Activated CD4-positive, alpha-beta memory T cell treated with anti-CD3 and anti-CD28 coated beads for 36 hours (primary cell): ENCODE measurements at regions of chr5 and their contacts with region 1.

Region 1: GRCh38 chr5:148186248-148186996 is 16.4 kb upstream of the SPINK6 start:
- DNase-seq: no peak
- H3K4me3 Mint-ChIP-seq: no peak overlapping the region
- H3K27ac Mint-ChIP-seq: no peak overlapping the region
- H3K4me1 Mint-ChIP-seq: peaks cover 9% of the 10 kb centered on the region
- H3K27me3 Mint-ChIP-seq: peaks cover 8% of the 10 kb centered on the region

Region 2: DNA sequence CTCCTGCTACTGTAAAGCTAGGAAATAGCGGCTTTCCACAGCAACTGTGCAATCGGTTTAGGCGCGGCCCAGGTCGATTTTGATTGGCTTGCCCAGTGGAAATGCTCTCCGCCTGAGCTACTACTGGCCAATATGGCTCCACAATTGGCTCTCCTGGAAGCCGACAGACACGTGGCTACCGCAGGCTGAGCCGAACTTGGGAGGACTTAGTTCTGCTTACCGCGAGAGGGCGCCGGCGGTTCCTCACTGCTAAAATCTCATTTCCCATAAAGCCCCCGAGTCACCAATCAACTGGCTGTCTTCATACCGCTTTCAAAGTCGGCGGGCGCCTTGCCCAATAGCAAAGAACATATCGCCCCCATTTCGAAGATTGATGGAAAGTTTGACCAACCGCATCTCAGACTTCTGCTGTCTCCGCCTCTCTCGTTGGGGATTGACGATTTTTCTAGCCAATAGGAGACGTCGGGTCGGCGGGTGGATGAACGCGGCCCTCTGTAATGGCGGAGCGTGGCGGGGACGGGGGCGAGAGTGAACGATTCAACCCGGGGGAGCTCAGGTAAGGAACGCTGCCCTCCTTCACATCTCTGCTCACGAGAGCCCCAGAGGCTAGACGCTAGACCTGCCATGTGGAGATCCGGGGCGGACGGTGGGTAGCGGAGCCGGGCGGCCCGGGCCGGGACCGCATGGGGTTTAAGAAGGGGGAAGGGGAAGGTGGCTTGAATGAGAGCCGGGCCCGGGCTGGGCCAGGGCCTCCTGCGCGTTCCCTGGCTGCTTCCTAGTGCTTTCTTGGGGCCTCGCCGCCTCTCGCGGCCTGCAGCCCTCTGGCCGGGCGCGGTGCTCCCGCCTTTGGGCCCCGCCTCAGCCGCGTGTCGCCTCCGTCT is 1739.3 kb before region 1 on chr5 and contains the start of gene TCERG1:
- CTCF ChIA-PET with region 1: no interaction called
- POLR2A ChIA-PET with region 1: no interaction called
- intact Hi-C with region 1: loop called (anchors 10 kb)
- DNase-seq: peak; percentile 99
- H3K4me3 Mint-ChIP-seq: peak within 1 kb of the TSS; percentile 97
- H3K27ac Mint-ChIP-seq: peak within 1 kb of the TSS; percentile 98
- H3K4me1 Mint-ChIP-seq: peaks cover 37% of the 10 kb centered on the region
- H3K27me3 Mint-ChIP-seq: no peaks in the 10 kb centered on the region
- total RNA-seq, gene TCERG1: 93.3 to 99.4 TPM

Region 3: DNA sequence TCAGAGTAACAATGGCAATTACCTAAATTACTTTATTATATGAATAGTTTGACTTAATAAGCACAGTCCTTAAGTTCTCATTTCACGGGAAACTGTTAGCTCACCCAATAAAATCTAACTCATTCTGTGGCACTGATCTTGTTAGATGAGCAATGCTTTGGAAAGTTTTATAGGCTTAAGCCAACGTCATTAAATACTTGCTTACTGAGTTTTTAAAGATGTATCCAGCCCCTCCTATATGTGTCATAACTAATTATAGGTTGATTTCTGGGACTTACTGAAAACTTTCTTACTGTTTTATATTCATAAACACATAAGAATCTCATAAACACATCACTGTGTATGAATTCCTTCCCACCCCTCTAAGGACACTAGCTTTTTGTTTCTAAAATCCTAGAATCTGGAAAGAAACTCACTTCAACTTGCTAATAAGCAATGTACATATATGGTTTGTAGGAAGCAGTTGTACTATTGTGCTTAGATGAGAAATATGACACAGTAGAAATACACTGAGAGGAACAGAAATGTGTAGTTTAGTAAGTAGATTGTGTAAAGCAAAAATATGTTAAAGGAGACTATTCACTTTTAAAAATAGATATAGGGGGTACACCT is 37.8 kb after region 1 on chr5:
- CTCF ChIA-PET with region 1: no interaction called
- POLR2A ChIA-PET with region 1: no interaction called
- intact Hi-C with region 1: no loop called
- DNase-seq: no peak
- H3K4me3 Mint-ChIP-seq: no peak overlapping the region
- H3K27ac Mint-ChIP-seq: no peak overlapping the region
- H3K4me1 Mint-ChIP-seq: no peaks in the 10 kb centered on the region
- H3K27me3 Mint-ChIP-seq: peaks cover 8% of the 10 kb centered on the region

Region 4: GRCh38 chr5:148708854-148709253 is 522.4 kb after region 1 on chr5:
- CTCF ChIA-PET with region 1: no interaction called
- POLR2A ChIA-PET with region 1: no interaction called
- intact Hi-C with region 1: loop called (anchors 1 kb)
- DNase-seq: peak; percentile 48
- H3K4me3 Mint-ChIP-seq: no peak overlapping the region
- H3K27ac Mint-ChIP-seq: no peak overlapping the region
- H3K4me1 Mint-ChIP-seq: peaks cover 15% of the 10 kb centered on the region
- H3K27me3 Mint-ChIP-seq: peaks cover 25% of the 10 kb centered on the region

Region 5: DNA sequence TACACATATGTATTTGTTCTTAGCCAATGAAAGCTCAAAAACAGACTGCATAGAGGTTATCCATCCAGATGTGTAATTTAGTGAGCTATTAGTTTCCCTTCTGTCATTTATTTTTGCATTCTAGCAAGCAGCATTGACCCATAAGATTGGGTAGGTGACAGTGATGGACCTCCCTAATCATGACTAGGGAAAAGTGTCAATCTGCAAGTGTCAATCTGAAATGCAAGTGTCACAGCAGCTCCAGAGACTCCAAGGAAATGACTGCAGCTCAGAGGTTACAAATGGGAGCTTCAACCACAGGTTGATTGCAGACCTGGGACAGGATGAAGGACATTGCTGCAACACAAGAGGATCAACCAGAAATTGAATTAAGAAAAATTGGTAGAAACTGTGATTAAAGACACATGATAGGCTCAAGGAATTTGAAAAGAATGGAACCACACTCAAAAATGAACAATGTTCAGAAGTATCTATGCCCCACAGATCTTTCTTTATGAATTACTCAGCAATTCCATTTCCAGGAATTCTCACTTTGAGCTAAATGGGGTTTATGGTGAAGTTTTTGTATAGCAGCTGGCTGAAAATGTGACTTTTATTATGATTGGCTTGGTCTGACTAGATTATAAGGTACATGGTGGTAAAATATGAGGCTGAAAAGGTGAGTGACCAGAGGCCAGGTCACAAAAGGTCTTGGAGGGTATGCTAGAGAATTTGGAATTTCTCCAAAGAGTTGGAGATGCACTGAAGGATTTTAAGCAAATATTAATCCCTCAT is 527.5 kb after region 1 on chr5:
- CTCF ChIA-PET with region 1: no interaction called
- POLR2A ChIA-PET with region 1: no interaction called
- intact Hi-C with region 1: loop called (anchors 1 kb)
- DNase-seq: no peak
- H3K4me3 Mint-ChIP-seq: no peak overlapping the region
- H3K27ac Mint-ChIP-seq: no peak overlapping the region
- H3K4me1 Mint-ChIP-seq: peaks cover 17% of the 10 kb centered on the region
- H3K27me3 Mint-ChIP-seq: peaks cover 42% of the 10 kb centered on the region

Region 6: DNA sequence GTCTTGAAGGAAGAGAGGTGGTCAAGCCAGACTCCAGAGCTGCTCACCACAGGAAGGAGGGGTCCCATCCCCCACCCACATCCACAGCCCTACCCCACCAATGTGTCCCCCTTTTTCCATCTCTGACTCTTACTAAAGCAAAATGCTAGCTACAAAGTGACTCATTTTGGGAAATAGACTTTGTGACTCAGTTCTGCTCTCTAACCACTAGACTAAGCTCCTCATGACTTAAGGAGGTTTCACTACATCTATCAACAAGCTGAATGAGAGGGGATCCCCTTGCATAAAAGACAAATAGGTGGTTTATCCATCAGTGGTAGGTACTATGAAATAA is 604.9 kb after region 1 on chr5:
- CTCF ChIA-PET with region 1: interaction called, 4 read pairs
- POLR2A ChIA-PET with region 1: no interaction called
- intact Hi-C with region 1: loop called (anchors 5 kb)
- DNase-seq: peak; percentile 77
- H3K4me3 Mint-ChIP-seq: no peak overlapping the region
- H3K27ac Mint-ChIP-seq: no peak overlapping the region
- H3K4me1 Mint-ChIP-seq: peaks cover 24% of the 10 kb centered on the region
- H3K27me3 Mint-ChIP-seq: peaks cover 33% of the 10 kb centered on the region